Endothelial cell of umbilical vein (primary cell): ENCODE measurements at regions of chr21 and their contacts with region 1.

Region 1: GRCh38 chr21:43728467-43729390 is 9.8 kb downstream of the PDXK start:
- DNase-seq: peak; percentile 91
- H3K4me3 ChIP-seq: peak overlapping the region; percentile 13 to 27 (median 24)
- H3K27ac ChIP-seq: peak overlapping the region; percentile 79
- H3K4me1 ChIP-seq: peaks cover 38% of the 10 kb centered on the region
- H3K27me3 ChIP-seq: no peaks in the 10 kb centered on the region
- CTCF ChIP-seq: peak in 1 of 2 donors; percentile 16
- POLR2A ChIP-seq: peak; percentile 80

Region 2: DNA sequence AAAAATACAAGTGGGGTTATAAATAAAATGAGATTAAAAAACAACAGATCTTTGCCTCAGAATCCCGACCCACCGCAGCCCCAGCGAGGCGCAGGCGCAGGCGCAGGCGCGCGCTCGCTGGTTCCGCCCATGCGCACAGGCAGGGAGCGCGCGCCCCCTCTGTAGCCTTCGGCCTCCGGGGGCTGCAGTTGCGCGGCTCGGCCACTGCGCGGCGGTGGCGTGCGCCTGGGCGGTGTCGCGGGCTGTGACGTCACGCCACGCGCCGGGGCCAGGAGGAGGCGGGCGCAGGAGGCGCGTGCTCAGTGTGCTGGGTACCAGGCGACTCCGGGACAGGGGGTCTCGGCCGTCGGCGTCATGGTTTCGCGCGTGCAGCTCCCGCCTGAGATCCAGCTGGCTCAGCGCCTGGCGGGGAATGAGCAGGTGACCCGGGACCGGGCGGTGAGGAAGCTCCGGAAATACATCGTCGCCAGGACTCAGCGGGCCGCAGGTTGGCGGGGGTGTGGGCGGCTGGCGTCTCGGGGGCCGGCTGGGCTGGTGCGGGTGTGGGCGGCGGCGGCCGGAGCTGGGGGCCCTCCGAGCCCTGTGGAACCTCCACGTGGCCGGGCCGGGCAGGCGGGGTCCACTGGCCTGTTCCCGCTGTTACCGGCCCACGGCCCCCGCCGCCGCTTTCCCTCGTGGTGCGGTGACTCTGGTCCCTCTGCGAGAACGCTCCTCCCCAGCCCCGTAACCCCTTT is 60.7 kb after region 1 on chr21 and contains the start of gene RRP1:
- CTCF ChIA-PET with region 1: interaction called, 6 read pairs
- POLR2A ChIA-PET with region 1: no interaction called
- dilution Hi-C with region 1: no loop called
- intact Hi-C with region 1: loop called (anchors 5 kb)
- DNase-seq: peak; percentile 91
- H3K4me3 ChIP-seq: peak within 1 kb of the TSS; percentile 85 to 95 (median 91)
- H3K27ac ChIP-seq: peak within 1 kb of the TSS; percentile 59
- H3K4me1 ChIP-seq: peaks cover 7% of the 10 kb centered on the region
- H3K27me3 ChIP-seq: no peaks in the 10 kb centered on the region
- CTCF ChIP-seq: peak; percentile 79 to 98
- POLR2A ChIP-seq: peak; percentile 96
- total RNA-seq, gene RRP1: 35.0 and 36.3 TPM in 2 replicates